ENCODE measurements at regions of chr1 and their contacts with region 1.

Region 1: GRCh38 chr1:9292361-9293240 is at the start of gene SPSB1:
- DNase-seq: peak; percentile 76
- ATAC-seq: peak; percentile 73 to 79
- total RNA-seq, gene SPSB1: 16.8 to 19.1 TPM

Region 2: DNA sequence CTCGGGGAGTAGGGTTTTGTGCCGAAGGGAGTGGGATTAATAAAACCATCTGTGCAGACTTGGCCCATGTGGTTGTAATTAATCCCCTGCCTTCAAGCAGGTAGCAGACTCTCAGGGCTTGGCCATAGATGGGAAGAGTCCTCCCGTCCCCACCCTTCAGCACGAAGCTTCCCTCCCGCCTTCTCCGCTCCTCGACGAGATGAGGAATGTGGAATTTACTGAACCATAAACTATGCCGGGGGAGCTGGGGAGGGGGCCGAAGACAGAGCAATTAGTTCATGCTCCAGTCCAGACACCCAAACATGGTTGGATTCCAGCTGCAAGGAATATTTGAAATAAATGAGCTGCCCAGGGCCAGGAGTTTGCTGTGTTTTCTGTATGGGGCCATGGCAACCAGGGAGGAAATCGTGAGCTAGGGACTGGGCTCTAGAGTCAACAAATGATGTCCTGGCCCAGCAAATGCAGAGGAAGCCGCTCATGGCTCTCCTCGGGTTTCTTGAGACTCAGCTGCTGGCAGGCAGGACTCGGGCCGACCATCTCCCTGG is 78.9 kb after region 1 on chr1:
- intact Hi-C with region 1: loop called in 1 of 2 experiments (anchors 10 kb)
- DNase-seq: peak; percentile 65
- ATAC-seq: peak; percentile 78 to 80

Region 3: GRCh38 chr1:9388335-9389180 is 96.0 kb after region 1 on chr1:
- intact Hi-C with region 1: loop called in 1 of 2 experiments (anchors 10 kb)
- DNase-seq: no peak
- ATAC-seq: peak in 1 of 2 donors; percentile 25

Region 4: DNA sequence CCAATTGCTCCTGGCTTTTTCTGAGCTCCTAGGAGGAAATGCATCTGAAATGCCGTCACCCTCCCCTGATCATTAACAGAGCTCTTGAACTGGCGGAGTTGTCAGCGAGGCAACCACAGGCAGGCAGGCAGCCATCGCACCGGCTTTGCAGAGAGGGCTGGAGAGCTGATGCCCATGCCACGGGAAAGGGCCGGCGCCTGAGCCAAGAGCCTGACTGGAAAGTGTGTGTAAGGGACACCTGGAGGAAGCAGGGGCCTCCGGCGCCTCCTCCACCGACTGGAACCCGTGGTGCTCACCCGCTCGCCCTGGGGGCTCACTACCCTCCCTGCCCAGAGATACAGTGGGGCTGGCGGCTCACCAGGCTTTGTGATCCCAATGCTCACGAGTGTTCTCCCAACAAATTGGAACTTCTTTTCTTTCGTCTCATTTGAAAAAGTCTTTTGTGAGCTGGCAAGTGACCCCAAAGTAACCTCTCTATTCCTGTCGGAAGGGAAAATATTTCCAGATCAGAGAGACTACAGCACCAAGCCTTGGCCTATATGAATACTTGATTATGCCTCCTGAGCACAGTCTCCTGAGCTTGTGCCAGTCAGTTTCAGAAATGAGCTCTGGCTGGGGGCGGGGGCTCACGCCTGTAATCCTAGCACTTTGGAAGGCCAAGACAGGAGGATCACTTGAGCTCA is 149.0 kb after region 1 on chr1:
- intact Hi-C with region 1: loop called in 1 of 2 experiments (anchors 5 kb)
- DNase-seq: peak; percentile 46
- ATAC-seq: peak; percentile 24 to 38

Region 5: GRCh38 chr1:9455487-9456234 is 163.1 kb after region 1 on chr1:
- intact Hi-C with region 1: loop called (anchors 2 to 10 kb)
- DNase-seq: peak; percentile 81
- ATAC-seq: peak; percentile 82 to 87

Region 6: DNA sequence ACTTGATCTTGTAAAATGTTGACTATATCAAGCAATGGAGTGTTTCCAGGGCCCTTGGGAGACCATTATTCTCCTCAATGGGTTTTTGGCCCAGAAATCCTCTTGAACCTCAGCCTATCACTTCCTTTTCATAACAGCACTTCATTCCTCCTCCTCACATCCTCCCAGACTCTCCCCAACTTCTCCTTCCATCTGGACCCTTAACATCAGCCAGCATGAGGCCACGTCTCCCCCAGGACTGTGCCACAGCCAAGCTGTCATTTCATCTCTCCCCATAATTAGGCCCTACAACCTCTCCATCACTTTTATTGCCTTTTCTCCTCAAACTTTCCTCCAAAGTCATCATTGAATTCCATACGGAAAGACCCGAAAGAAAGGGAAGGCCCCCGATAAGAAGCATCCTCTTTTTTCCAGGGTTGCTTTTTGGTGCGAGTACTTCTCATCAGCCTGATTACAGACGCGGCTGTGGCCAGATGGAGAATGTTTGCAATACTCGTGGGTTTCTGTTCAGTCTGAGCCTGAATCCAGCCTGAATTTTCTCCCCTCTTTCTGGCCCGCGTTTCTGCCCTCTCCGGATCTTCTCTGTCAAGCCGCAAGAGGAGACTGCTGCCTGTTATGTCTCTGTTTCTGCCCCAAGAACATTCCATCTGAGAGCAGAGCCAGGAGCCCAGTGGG is 194.0 kb after region 1 on chr1:
- intact Hi-C with region 1: loop called (anchors 2 to 10 kb)
- DNase-seq: no peak
- ATAC-seq: peak in 1 of 2 donors; percentile 18

Measured in left cardiac atrium (tissue), 4 donors.